OCI-LY7 (cell line): ENCODE measurements at regions of chr12 and their contacts with region 1.

Region 1: GRCh38 chr12:12546314-12546772 is 16.3 kb downstream of the DUSP16 start:
- DNase-seq: no peak
- H3K4me3 ChIP-seq: no peak overlapping the region
- H3K27ac ChIP-seq: no peak overlapping the region
- H3K4me1 ChIP-seq: peaks cover 17% of the 10 kb centered on the region
- CTCF ChIP-seq: no peak

Region 2: GRCh38 chr12:11821386-11822080 is 724.8 kb before region 1 on chr12:
- CTCF ChIA-PET with region 1: no interaction called
- POLR2A ChIA-PET with region 1: interaction called, 12 read pairs
- intact Hi-C with region 1: no loop called
- DNase-seq: no peak
- H3K4me3 ChIP-seq: no peak overlapping the region
- H3K27ac ChIP-seq: peak overlapping the region; percentile 54
- H3K4me1 ChIP-seq: peaks cover 60% of the 10 kb centered on the region
- CTCF ChIP-seq: no peak

Region 3: GRCh38 chr12:12194206-12194605 is 352.1 kb before region 1 on chr12:
- CTCF ChIA-PET with region 1: no interaction called
- POLR2A ChIA-PET with region 1: interaction called, 12 read pairs
- intact Hi-C with region 1: no loop called
- DNase-seq: no peak
- H3K4me3 ChIP-seq: no peak overlapping the region
- H3K27ac ChIP-seq: no peak overlapping the region
- H3K4me1 ChIP-seq: no peaks in the 10 kb centered on the region
- CTCF ChIP-seq: no peak